ENCODE measurements at regions of chr10 and their contacts with region 1.

Region 1: DNA sequence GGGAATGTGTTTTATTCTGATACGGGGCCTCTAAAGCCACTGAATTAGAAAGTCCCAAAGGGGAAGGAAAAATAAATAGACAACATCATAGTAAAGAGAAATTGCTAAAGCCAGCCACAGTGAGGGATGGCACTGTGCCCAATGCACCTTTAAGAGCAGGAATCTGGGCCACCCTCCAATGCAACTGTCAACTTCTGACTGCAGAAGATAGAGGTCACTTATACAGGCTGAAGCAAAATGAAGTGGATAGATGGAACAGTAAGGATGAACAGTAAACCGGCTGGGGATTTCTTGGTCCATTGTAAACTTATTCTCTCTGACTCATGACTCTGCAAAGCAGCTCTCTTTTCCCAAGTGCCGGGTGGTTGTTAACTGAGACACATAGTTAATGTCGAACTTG is 54.0 kb upstream of the KCNIP2 start:
- DNase-seq: no peak
- ATAC-seq: peak; percentile 68

Region 2: DNA sequence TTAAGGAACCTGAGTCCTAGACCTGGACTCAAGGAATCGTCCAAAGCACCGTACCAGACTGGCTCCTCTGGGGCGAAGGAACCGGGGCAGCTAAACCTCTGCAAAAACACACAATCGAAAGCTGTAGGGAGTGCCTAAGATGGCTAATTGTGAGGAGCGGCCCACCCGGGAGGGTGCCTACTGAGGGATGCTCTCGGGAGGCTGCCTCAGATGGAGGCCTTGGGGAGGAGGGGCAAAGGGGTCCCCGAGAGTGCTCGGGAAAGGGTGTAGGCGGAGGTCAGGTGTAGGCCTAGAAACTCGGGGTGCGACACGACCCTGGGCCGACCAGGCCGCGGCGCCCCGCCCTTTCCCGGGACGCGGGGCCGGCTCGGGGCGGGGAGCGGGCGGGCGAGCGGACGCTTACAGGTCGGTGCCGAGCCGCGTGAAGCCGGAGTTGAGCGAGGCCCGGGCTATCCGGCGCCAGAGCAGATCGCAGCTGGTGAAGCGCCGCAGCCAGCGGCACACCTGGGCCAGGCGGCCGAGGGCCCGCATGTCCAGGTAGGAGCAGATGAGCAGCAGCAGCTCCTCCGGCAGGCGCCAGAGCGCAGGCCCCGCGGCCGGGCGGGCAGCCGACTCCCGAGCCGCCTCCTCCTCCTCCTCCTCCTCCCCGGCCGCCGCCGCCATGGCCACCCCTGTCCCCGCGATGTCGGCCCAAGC is 203.5 kb before region 1 on chr10:
- intact Hi-C with region 1: no loop called
- DNase-seq: peak; percentile 81
- ATAC-seq: peak; percentile 90

Region 3: GRCh38 chr10:101938316-101939281 is 41.0 kb after region 1 on chr10:
- intact Hi-C with region 1: loop called (anchors 5 kb)
- DNase-seq: no peak
- ATAC-seq: no peak

Region 4: GRCh38 chr10:101952191-101952590 is 54.6 kb after region 1 on chr10:
- intact Hi-C with region 1: no loop called
- DNase-seq: no peak
- ATAC-seq: no peak

Region 5: GRCh38 chr10:101968940-101969321 is 71.3 kb after region 1 on chr10:
- intact Hi-C with region 1: loop called (anchors 2 kb)
- DNase-seq: no peak
- ATAC-seq: no peak